ENCODE measurements at regions of chr1 and their contacts with region 1.

Region 1: GRCh38 chr1:18972531-18972930 is 16.1 kb upstream of the IFFO2 start:
- DNase-seq: peak; percentile 63
- ATAC-seq: peak; percentile 39
- H3K4me3 ChIP-seq: no peak overlapping the region
- H3K4me3 Mint-ChIP-seq: no peak overlapping the region
- H3K27ac ChIP-seq: no peak overlapping the region
- H3K27ac Mint-ChIP-seq: no peak overlapping the region
- H3K4me1 ChIP-seq: no peaks in the 10 kb centered on the region
- H3K4me1 Mint-ChIP-seq: no peaks in the 10 kb centered on the region
- H3K27me3 ChIP-seq: no peaks in the 10 kb centered on the region
- H3K27me3 Mint-ChIP-seq: peaks cover 18% of the 10 kb centered on the region
- CTCF ChIP-seq: peak; percentile 69

Region 2: DNA sequence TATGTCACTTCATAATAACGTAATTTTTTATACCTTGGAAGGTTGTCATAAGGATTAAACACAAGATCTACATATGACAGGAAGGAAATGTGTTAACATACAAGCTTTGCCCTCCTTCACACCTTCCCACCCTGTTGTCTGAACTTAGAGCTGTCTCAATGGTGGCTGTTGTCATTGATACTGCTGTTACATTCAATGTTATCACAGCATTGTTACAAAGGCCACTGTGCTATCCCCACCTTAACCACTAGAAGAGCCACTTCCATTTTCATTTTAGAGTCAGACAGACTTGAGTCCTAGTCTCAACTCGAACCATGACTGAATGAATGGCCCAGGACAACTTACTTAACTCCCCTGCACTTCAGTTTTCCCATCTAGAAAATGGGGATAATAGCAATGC is 144.3 kb before region 1 on chr1:
- CTCF ChIA-PET with region 1: no interaction called
- POLR2A ChIA-PET with region 1: no interaction called
- intact Hi-C with region 1: no loop called
- DNase-seq: no peak
- ATAC-seq: no peak
- H3K4me3 ChIP-seq: no peak overlapping the region
- H3K4me3 Mint-ChIP-seq: no peak overlapping the region
- H3K27ac ChIP-seq: no peak overlapping the region
- H3K27ac Mint-ChIP-seq: no peak overlapping the region
- H3K4me1 ChIP-seq: no peaks in the 10 kb centered on the region
- H3K4me1 Mint-ChIP-seq: no peaks in the 10 kb centered on the region
- H3K27me3 ChIP-seq: peaks cover 0 to 3% (median 1%) of the 10 kb centered on the region in 4 experiments
- H3K27me3 Mint-ChIP-seq: peaks cover 8% of the 10 kb centered on the region
- CTCF ChIP-seq: no peak

Region 3: DNA sequence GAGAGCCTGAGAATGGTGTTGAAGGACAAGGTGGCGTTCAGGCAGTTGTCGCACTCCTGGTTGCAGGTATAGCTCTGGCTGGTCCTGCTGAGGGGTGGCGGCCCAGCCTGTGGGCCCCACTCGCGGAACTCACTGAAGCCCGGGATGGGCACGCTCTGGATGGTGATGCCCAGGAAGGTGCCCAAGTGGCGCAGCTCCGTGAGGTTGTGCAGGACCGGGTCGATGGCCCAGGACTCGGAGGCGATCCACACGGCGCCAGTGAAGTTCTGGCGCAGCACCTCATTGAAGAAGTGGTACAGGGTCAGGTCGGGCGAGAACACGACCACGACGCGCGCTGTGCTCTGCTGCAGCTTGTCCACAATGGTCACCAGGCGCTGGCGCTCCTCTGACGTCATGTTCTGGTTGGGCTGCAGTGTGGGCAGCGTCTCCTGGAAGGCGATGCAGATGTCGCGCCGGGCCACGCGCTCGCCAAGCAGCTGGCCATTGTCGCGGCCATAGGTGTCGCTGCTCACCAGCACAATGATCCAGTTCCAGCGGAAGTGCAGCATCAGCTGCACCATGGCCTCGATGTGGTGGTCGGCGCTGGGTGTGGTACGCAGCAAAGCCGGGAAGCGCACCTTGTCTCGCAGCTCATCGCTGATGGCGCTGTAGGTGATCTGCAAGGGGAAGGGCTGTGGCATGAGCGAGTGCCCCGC is 118.1 kb before region 1 on chr1:
- CTCF ChIA-PET with region 1: no interaction called
- POLR2A ChIA-PET with region 1: no interaction called
- intact Hi-C with region 1: no loop called
- DNase-seq: no peak
- ATAC-seq: no peak
- H3K4me3 ChIP-seq: no peak overlapping the region
- H3K4me3 Mint-ChIP-seq: no peak overlapping the region
- H3K27ac ChIP-seq: no peak overlapping the region
- H3K27ac Mint-ChIP-seq: no peak overlapping the region
- H3K4me1 ChIP-seq: no peaks in the 10 kb centered on the region
- H3K4me1 Mint-ChIP-seq: no peaks in the 10 kb centered on the region
- H3K27me3 ChIP-seq: peaks cover 0 to 3% (median 1%) of the 10 kb centered on the region in 4 experiments
- H3K27me3 Mint-ChIP-seq: peaks cover 13% of the 10 kb centered on the region
- CTCF ChIP-seq: no peak

Region 4: DNA sequence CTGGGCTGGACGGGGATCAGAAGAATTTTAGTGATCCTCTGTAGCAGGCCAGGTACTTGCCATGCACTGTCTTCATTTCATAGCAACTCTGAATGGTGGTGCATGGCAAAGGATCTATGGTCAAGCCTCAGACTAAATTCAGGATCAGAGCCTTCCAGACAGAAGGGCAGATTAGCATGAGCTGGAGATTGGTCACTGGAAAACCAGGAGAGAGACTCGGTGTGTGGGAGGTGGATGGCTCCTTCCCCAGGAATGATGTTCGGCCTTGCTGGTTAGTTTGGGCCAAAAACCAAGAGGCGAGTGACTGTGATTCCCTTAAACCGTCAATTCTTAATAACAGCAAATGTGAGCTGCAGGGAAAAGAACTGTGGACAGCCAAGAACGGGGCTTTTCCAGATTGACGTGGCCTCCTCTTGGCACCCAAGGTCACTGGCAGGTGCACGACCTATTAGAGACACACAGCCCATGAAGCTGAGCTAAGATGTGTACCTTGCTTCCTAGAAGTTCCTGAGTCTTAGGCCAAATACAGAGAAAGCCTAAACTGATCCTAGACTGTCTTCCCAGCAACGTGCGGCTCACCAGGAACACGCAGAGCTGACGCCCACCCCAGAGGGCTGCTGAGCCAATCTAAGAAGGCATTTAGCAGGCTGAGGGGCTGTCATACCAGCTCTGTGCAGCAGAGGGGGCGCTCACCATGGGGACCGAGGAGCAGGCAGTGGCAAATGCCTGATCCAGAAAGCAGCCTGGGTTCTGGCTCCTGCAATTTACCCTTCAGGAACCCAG is 88.7 kb before region 1 on chr1:
- CTCF ChIA-PET with region 1: interaction called, 91 read pairs
- POLR2A ChIA-PET with region 1: no interaction called
- intact Hi-C with region 1: no loop called
- DNase-seq: peak; percentile 76
- ATAC-seq: peak; percentile 79
- H3K4me3 ChIP-seq: no peak overlapping the region
- H3K4me3 Mint-ChIP-seq: no peak overlapping the region
- H3K27ac ChIP-seq: no peak overlapping the region
- H3K27ac Mint-ChIP-seq: no peak overlapping the region
- H3K4me1 ChIP-seq: no peaks in the 10 kb centered on the region
- H3K4me1 Mint-ChIP-seq: no peaks in the 10 kb centered on the region
- H3K27me3 ChIP-seq: no peaks in the 10 kb centered on the region
- H3K27me3 Mint-ChIP-seq: no peaks in the 10 kb centered on the region
- CTCF ChIP-seq: peak; percentile 96

Region 5: DNA sequence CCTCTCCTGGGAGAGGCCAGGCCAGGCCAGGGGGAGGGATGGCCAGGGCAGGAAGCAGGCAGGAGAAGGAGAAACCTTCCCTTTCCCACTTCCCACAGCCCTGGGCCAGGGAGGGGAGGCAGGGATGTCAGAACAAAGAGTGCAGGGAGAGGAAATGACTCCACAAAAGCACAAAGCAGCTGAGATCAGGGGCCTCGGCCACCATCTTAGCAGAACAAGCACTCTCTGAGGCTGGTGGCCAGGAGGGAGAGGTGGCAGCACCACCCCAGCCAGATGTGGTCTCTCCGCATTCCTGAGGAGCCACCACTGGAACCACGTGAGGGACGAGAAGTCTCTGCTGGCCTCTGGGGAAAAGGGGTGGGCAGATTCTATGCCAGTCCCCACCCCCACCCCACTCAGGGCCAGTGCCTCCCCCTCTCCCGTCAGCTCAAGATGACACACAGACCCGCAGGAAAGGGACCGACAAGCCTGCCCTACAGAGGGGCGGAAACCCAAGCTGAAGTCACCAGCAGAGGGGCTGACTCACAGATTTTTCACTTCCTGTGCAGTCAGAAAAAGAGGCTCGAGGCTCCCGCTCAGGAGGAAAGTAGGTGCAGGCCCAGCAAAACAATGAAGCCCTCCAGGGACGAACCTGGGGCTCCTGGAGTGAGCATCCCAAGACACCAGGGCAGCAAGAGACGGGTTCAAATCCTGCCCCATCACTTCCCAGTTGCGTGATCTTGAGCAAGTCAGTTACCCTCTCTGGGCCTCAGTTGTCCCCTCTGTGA is 46.0 kb before region 1 on chr1:
- CTCF ChIA-PET with region 1: interaction called, 25 read pairs
- POLR2A ChIA-PET with region 1: no interaction called
- intact Hi-C with region 1: loop called (anchors 5 kb)
- DNase-seq: peak; percentile 72
- ATAC-seq: peak; percentile 84
- H3K4me3 ChIP-seq: peak overlapping the region; percentile 11 to 51 (median 38)
- H3K4me3 Mint-ChIP-seq: peak overlapping the region; percentile 68
- H3K27ac ChIP-seq: peak overlapping the region; percentile 73 to 85
- H3K27ac Mint-ChIP-seq: peak overlapping the region; percentile 97
- H3K4me1 ChIP-seq: peaks cover 53 to 54% of the 10 kb centered on the region in 2 donors
- H3K4me1 Mint-ChIP-seq: peaks cover 71% of the 10 kb centered on the region
- H3K27me3 ChIP-seq: no peaks in the 10 kb centered on the region
- H3K27me3 Mint-ChIP-seq: no peaks in the 10 kb centered on the region
- CTCF ChIP-seq: peak; percentile 19

Region 6: DNA sequence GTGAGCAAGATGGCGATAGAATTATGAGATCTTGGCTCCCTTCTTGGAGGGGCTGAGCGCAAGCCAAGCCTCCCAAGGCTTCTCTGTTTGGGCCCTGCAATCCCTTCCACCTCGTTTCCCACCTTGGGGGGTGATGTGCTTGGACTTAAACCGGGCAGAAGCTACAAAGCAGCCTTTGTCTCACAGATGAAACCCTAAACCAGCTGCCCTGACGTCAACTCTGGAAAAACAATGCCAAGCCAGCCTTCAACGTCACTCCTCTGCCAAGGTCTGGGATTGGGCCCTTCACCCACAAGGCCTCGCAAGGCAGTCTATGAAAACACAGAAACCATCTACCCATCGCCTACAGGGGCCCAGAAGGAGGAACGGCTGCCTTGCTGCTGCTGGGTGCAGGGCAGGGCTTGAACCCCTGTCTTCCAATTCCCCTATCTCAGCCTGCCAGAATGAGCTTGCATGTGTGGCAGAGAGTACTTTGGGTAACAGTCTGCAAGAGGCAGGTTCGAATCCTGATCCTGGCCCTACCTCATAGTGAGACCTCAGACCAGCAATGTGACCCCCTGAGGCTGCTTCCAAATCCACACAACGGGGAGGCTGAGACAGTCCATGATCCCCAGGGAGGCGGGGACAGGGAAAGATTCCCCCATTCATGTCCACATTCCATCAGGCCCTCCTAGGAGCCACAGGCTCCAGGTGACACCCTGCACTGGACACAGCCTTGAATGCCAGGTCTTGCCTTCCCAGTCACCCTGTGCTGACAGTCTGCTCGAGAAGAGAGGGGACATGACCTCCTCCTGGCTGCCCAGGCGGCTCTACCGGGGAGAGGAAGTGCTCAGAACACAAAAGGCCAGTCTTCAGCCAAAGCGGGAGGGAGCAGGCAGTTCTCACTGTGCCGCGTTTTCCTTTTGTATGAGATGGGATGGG is 31.1 kb before region 1 on chr1:
- CTCF ChIA-PET with region 1: interaction called, 11 read pairs
- POLR2A ChIA-PET with region 1: no interaction called
- intact Hi-C with region 1: no loop called
- DNase-seq: no peak
- ATAC-seq: no peak
- H3K4me3 ChIP-seq: no peak overlapping the region
- H3K4me3 Mint-ChIP-seq: no peak overlapping the region
- H3K27ac ChIP-seq: no peak overlapping the region
- H3K27ac Mint-ChIP-seq: no peak overlapping the region
- H3K4me1 ChIP-seq: peaks cover 18 to 37% of the 10 kb centered on the region in 2 donors
- H3K4me1 Mint-ChIP-seq: peaks cover 47% of the 10 kb centered on the region
- H3K27me3 ChIP-seq: no peaks in the 10 kb centered on the region
- H3K27me3 Mint-ChIP-seq: no peaks in the 10 kb centered on the region
- CTCF ChIP-seq: no peak

Region 7: GRCh38 chr1:18949686-18950400 is 22.7 kb before region 1 on chr1:
- CTCF ChIA-PET with region 1: interaction called, 25 read pairs
- POLR2A ChIA-PET with region 1: no interaction called
- intact Hi-C with region 1: no loop called
- DNase-seq: peak; percentile 56
- ATAC-seq: no peak
- H3K4me3 ChIP-seq: peak overlapping the region; percentile 23 to 64 (median 47)
- H3K4me3 Mint-ChIP-seq: peak overlapping the region; percentile 85
- H3K27ac ChIP-seq: peak overlapping the region; percentile 97 to 100
- H3K27ac Mint-ChIP-seq: peak overlapping the region; percentile 98
- H3K4me1 ChIP-seq: peaks cover 91 to 97% of the 10 kb centered on the region in 2 donors
- H3K4me1 Mint-ChIP-seq: peaks cover 94% of the 10 kb centered on the region
- H3K27me3 ChIP-seq: no peaks in the 10 kb centered on the region
- H3K27me3 Mint-ChIP-seq: no peaks in the 10 kb centered on the region
- CTCF ChIP-seq: no peak

Region 8: GRCh38 chr1:18956369-18957135 is 16.0 kb before region 1 on chr1 and contains the start of gene IFFO2:
- CTCF ChIA-PET with region 1: interaction called, 25 read pairs
- POLR2A ChIA-PET with region 1: interaction called, 3 read pairs
- intact Hi-C with region 1: loop called (anchors 1 kb)
- DNase-seq: peak; percentile 97
- ATAC-seq: peak; percentile 88
- H3K4me3 ChIP-seq: peak within 1 kb of the TSS; percentile 33 to 73 (median 64)
- H3K4me3 Mint-ChIP-seq: peak within 1 kb of the TSS; percentile 90
- H3K27ac ChIP-seq: peak within 1 kb of the TSS in 1 of 2 donors; percentile 13
- H3K27ac Mint-ChIP-seq: peak within 1 kb of the TSS; percentile 78
- H3K4me1 ChIP-seq: peaks cover 50 to 53% of the 10 kb centered on the region in 2 donors
- H3K4me1 Mint-ChIP-seq: peaks cover 46% of the 10 kb centered on the region
- H3K27me3 ChIP-seq: peaks cover 0 to 10% (median 4%) of the 10 kb centered on the region in 4 experiments
- H3K27me3 Mint-ChIP-seq: peaks cover 9% of the 10 kb centered on the region
- CTCF ChIP-seq: no peak
- total RNA-seq, gene IFFO2: 15.4 and 16.8 TPM in 2 replicates

Region 9: GRCh38 chr1:19750101-19750881 is 777.8 kb after region 1 on chr1:
- CTCF ChIA-PET with region 1: no interaction called
- POLR2A ChIA-PET with region 1: no interaction called
- intact Hi-C with region 1: no loop called
- DNase-seq: no peak
- ATAC-seq: no peak
- H3K4me3 ChIP-seq: no peak overlapping the region
- H3K4me3 Mint-ChIP-seq: no peak overlapping the region
- H3K27ac ChIP-seq: no peak overlapping the region
- H3K27ac Mint-ChIP-seq: no peak overlapping the region
- H3K4me1 ChIP-seq: no peaks in the 10 kb centered on the region
- H3K4me1 Mint-ChIP-seq: no peaks in the 10 kb centered on the region
- H3K27me3 ChIP-seq: no peaks in the 10 kb centered on the region
- H3K27me3 Mint-ChIP-seq: no peaks in the 10 kb centered on the region
- CTCF ChIP-seq: no peak